ENCODE measurements at regions of chr15 and their contacts with region 1.

Region 1: DNA sequence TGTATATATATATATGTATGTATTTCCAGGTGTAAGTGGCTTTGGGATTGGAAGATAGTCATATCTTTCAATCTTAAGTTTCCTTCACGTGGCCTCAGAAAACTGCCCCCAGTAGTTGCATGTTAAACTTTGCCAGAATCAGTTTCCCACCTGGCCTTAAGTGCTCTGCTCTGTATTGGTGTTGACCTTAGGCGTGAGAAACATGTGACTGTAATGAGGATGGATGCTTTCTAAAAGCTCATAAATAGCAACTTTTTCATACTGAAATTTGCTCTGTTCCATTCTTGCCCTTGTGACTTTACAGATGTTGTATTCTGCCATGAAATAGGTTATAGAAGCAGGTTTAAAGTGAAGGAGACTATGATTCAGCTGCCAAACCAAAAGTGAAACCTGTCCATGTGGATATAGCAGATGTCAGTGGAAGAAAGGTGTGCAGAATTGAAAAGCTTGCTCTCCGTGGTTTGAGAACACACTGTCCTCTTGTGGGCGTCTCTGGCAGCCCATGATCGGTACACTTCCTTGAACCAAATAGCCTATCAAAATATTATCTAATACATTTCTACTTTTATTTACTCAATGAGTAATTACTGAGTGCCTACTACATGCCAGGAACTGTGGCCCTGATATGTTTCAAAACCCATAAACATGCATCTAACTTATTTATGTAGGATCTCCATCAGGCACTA is 15.8 kb downstream of the SCG5 start:
- DNase-seq: no peak
- ATAC-seq: no peak
- H3K4me3 ChIP-seq: no peak overlapping the region
- H3K27ac ChIP-seq: no peak overlapping the region
- H3K4me1 ChIP-seq: peaks cover 24% of the 10 kb centered on the region
- CTCF ChIP-seq: 0 out of 3 replicates have a peak, but pooled peaks have one; percentile 11
- EP300 ChIP-seq: no peak
- POLR2A ChIP-seq: no peak
- RAD21 ChIP-seq: no peak

Region 2: DNA sequence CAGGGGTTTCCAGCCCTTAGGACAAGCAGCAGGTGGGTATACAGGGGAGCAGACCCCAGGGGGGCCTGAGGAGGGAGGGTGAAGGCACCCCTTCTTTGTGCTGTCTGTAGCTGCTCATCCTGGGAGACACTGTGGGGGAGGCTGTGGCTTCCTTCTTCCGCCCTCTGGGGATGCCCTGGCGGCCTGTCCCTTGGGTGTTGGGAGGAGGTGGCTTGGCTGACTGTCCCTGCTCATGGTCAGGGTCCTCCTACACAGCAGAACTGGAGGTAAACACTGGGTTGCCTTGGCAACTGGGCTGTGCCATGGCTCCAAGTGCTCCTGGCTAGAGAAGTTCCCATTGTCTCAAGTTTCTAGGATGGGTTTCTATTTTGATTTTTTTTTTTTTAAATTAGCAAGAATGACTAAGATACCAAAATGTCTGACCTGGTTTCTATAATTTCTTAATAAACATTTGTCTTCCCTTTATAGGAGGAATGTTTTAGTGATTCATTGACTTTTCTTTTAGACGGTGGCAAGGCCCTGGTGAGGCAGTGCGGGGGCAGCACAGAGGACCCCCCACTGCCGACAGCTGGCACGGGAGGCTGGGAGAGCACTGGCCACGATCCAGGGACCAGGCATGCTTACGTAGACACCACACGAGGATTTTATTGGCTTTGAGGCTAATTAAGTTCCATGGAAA is 1318.3 kb before region 1 on chr15:
- CTCF ChIA-PET with region 1: no interaction called
- POLR2A ChIA-PET with region 1: no interaction called
- DNase-seq: peak; percentile 30 to 58
- ATAC-seq: peak; percentile 57 to 61; a peak in 5 of 6 replicates
- H3K4me3 ChIP-seq: no peak overlapping the region
- H3K27ac ChIP-seq: peak overlapping the region in 1 of 2 experiments; percentile 52; a peak in 3 of 6 replicates
- H3K4me1 ChIP-seq: peaks cover 30% of the 10 kb centered on the region
- CTCF ChIP-seq: no peak
- EP300 ChIP-seq: no peak
- POLR2A ChIP-seq: no peak
- RAD21 ChIP-seq: no peak

Region 3: GRCh38 chr15:32669896-32670619 is 12.7 kb after region 1 on chr15:
- CTCF ChIA-PET with region 1: interaction called, 106 read pairs
- POLR2A ChIA-PET with region 1: no interaction called
- DNase-seq: no peak
- ATAC-seq: peak in 1 of 2 experiments; percentile 56; a peak in 3 of 6 replicates
- H3K4me3 ChIP-seq: no peak overlapping the region
- H3K27ac ChIP-seq: peak overlapping the region; percentile 4 to 13; a peak in 3 of 6 replicates
- H3K4me1 ChIP-seq: peaks cover 22% of the 10 kb centered on the region; the same call in 2 of the 3 replicates
- CTCF ChIP-seq: no peak
- EP300 ChIP-seq: no peak
- POLR2A ChIP-seq: no peak
- RAD21 ChIP-seq: no peak

Region 4: DNA sequence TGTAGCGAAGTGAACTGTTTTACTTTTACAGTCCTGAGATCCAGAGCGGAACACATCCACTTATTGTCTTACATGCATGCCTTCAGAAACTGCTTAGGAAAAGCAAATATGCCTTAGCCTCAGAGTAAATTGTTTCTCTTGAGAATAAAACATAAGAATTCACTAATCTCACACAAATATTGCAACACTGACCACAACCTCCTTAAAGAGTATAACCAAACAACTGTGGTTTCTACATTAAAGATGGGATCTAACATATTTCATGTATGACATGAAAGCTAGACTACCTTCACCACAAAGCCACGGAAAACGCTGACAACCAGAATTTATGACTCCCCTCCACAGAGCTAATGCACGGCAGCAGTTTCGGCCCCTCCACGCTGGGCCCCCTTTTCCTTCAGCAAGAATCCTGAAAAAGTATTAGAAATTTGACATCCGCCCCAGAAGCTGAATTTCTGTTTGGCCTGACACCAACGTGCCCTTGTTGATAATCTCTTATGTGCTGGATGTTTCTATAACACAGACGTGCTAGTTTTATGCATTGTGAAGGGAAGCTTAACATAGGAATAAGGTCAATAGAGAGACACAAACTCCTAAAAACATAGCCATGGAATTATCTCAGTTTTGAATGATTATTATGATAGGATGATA is 145.1 kb after region 1 on chr15:
- CTCF ChIA-PET with region 1: interaction called, 15 read pairs
- POLR2A ChIA-PET with region 1: no interaction called
- DNase-seq: no peak
- ATAC-seq: no peak
- H3K4me3 ChIP-seq: no peak overlapping the region
- H3K27ac ChIP-seq: no peak overlapping the region
- H3K4me1 ChIP-seq: 0 out of 3 replicates have a peak, but pooled peaks cover 6% of the 10 kb centered on the region
- CTCF ChIP-seq: no peak
- EP300 ChIP-seq: no peak
- POLR2A ChIP-seq: no peak
- RAD21 ChIP-seq: no peak

Region 5: GRCh38 chr15:32888221-32888761 is 230.9 kb after region 1 on chr15:
- CTCF ChIA-PET with region 1: interaction called, 12 read pairs
- POLR2A ChIA-PET with region 1: no interaction called
- DNase-seq: no peak
- ATAC-seq: no peak
- H3K4me3 ChIP-seq: no peak overlapping the region
- H3K27ac ChIP-seq: no peak overlapping the region
- H3K4me1 ChIP-seq: no peaks in the 10 kb centered on the region
- CTCF ChIP-seq: no peak
- EP300 ChIP-seq: no peak
- POLR2A ChIP-seq: no peak
- RAD21 ChIP-seq: no peak

Region 6: GRCh38 chr15:32956006-32956405 is 298.7 kb after region 1 on chr15:
- CTCF ChIA-PET with region 1: interaction called, 167 read pairs
- POLR2A ChIA-PET with region 1: no interaction called
- DNase-seq: peak; percentile 55 to 77
- ATAC-seq: peak; percentile 80 to 87; a peak in 5 of 6 replicates
- H3K4me3 ChIP-seq: no peak overlapping the region
- H3K27ac ChIP-seq: peak overlapping the region; percentile 6 to 27; a peak in 2 of 6 replicates
- H3K4me1 ChIP-seq: peaks cover 17% of the 10 kb centered on the region; the same call in 2 of the 3 replicates
- CTCF ChIP-seq: peak; percentile 84
- EP300 ChIP-seq: no peak
- POLR2A ChIP-seq: no peak
- RAD21 ChIP-seq: peak; percentile 90 to 91

Region 7: DNA sequence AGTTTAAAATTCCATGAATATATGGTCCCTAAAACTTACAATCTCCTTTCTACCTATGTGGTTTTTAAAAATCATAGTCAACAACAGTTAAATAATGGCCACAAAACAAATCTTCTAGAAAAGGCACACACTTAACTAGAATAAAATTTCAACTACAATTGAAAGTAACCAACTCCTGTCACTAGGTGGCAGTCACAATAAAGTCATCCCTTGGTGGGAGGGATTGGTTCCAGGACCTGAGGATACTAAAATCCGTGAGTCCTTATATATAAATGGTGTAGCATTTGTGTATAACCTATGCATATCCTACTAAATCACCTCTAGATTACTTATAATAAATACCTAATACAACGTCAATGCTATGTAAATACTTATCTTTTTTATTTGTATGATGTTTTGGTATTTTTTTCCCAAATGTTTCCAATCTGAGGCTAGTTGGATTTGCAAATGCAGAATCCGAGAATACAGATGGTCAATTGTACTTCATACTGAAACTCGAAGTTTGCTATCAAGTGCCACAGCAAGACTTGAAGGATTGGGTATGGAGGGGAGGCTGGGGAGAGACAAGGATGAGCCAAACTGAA is 364.6 kb after region 1 on chr15:
- CTCF ChIA-PET with region 1: interaction called, 11 read pairs
- POLR2A ChIA-PET with region 1: no interaction called
- DNase-seq: peak; percentile 67 to 79
- ATAC-seq: peak; percentile 76 to 90; a peak in 4 of 6 replicates
- H3K4me3 ChIP-seq: no peak overlapping the region
- H3K27ac ChIP-seq: no peak overlapping the region
- H3K4me1 ChIP-seq: 0 out of 3 replicates have a peak, but pooled peaks cover 7% of the 10 kb centered on the region
- CTCF ChIP-seq: peak; percentile 89
- EP300 ChIP-seq: no peak
- POLR2A ChIP-seq: no peak
- RAD21 ChIP-seq: peak; percentile 77 to 78

Region 8: GRCh38 chr15:33034588-33034987 is 377.2 kb after region 1 on chr15:
- CTCF ChIA-PET with region 1: no interaction called
- POLR2A ChIA-PET with region 1: no interaction called
- DNase-seq: no peak
- ATAC-seq: no peak
- H3K4me3 ChIP-seq: no peak overlapping the region
- H3K27ac ChIP-seq: no peak overlapping the region
- H3K4me1 ChIP-seq: no peaks in the 10 kb centered on the region
- CTCF ChIP-seq: no peak
- EP300 ChIP-seq: no peak
- POLR2A ChIP-seq: no peak
- RAD21 ChIP-seq: no peak